A549 (cell line): ENCODE measurements at regions of chr10 and their contacts with region 1.

Region 1: GRCh38 chr10:88125766-88126165 is 262.3 kb downstream of the PTEN start:
- DNase-seq: no peak
- ATAC-seq: no peak
- H3K4me3 ChIP-seq: no peak overlapping the region
- H3K27ac ChIP-seq: no peak overlapping the region
- H3K4me1 ChIP-seq: no peaks in the 10 kb centered on the region
- CTCF ChIP-seq: no peak
- EP300 ChIP-seq: no peak
- POLR2A ChIP-seq: no peak
- RAD21 ChIP-seq: no peak

Region 2: GRCh38 chr10:87915989-87916388 is 209.8 kb before region 1 on chr10:
- CTCF ChIA-PET with region 1: no interaction called
- POLR2A ChIA-PET with region 1: no interaction called
- DNase-seq: no peak
- ATAC-seq: no peak
- H3K4me3 ChIP-seq: no peak overlapping the region
- H3K27ac ChIP-seq: no peak overlapping the region
- H3K4me1 ChIP-seq: peaks cover 17% of the 10 kb centered on the region
- CTCF ChIP-seq: no peak
- EP300 ChIP-seq: no peak
- POLR2A ChIP-seq: no peak
- RAD21 ChIP-seq: no peak

Region 3: DNA sequence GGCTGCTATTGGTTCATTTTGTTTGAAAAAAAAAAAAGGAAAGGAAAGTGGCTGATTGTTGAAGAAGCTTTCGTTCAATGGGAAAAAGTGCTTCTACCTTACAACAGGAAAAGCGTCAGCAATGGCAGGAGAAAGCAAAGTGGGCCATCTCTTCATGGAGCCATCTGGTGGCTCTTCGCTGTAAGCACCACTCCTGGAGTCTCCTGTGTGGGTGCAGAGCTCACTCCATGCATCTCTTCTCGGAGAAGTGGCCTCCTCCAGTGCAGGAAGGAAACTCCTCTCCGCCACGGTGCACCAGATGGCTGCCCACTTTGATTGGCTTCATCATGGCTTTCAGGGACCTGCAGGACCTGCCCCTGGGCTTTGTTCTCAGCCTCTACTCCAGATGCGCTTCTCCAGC is 11.4 kb before region 1 on chr10:
- CTCF ChIA-PET with region 1: interaction called, 10 read pairs
- POLR2A ChIA-PET with region 1: no interaction called
- DNase-seq: peak; percentile 62 to 66
- ATAC-seq: peak; percentile 83 to 93
- H3K4me3 ChIP-seq: no peak overlapping the region
- H3K27ac ChIP-seq: no peak overlapping the region
- H3K4me1 ChIP-seq: peaks cover 22% of the 10 kb centered on the region
- CTCF ChIP-seq: peak; percentile 56
- EP300 ChIP-seq: no peak
- POLR2A ChIP-seq: no peak
- RAD21 ChIP-seq: peak; percentile 67 to 71

Region 4: DNA sequence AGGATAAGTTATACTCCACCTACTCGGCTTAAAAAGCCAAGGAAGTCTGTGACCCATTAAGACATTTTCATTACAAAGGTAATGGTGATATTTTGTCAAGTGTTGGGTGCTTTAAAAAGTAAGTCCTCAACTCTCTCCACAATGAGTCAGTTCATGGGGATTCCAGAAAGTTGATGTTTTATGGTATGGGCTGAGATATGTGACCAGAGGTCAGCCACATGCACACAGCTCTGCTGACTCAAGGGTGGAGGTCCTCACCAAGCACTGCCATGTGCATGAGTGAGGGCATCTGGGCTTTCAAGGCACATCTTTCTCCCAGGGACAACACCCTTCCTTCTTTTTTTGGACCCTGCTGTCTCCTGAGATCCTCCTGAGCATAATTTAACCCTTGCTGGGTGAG is 30.6 kb after region 1 on chr10:
- CTCF ChIA-PET with region 1: no interaction called
- POLR2A ChIA-PET with region 1: no interaction called
- DNase-seq: no peak
- ATAC-seq: peak in 1 of 2 experiments; percentile 23; a peak in 1 of 6 replicates
- H3K4me3 ChIP-seq: no peak overlapping the region
- H3K27ac ChIP-seq: peak overlapping the region in 1 of 2 experiments; percentile 47; a peak in 1 of 6 replicates
- H3K4me1 ChIP-seq: peaks cover 33% of the 10 kb centered on the region
- CTCF ChIP-seq: no peak
- EP300 ChIP-seq: no peak
- POLR2A ChIP-seq: no peak
- RAD21 ChIP-seq: no peak